ENCODE measurements at regions of chr17 and their contacts with region 1.

Region 1: GRCh38 chr17:4997302-4998026 is at the starts of genes INCA1 and KIF1C:
- DNase-seq: peak; percentile 95
- ATAC-seq: peak; percentile 96
- H3K4me3 ChIP-seq: peak within 1 kb of the TSS; percentile 34 to 73 (median 66)
- H3K4me3 Mint-ChIP-seq: peak within 1 kb of the TSS; percentile 85
- H3K27ac ChIP-seq: peak within 1 kb of the TSS in 1 of 2 donors; percentile 65
- H3K27ac Mint-ChIP-seq: peak within 1 kb of the TSS; percentile 83
- H3K4me1 ChIP-seq: peaks cover 22 to 26% of the 10 kb centered on the region in 2 donors
- H3K4me1 Mint-ChIP-seq: peaks cover 21% of the 10 kb centered on the region
- H3K27me3 ChIP-seq: peaks cover 0 to 13% (median 2%) of the 10 kb centered on the region in 4 experiments
- H3K27me3 Mint-ChIP-seq: no peaks in the 10 kb centered on the region
- CTCF ChIP-seq: no peak
- total RNA-seq, gene INCA1: 0.30 and 0.51 TPM in 2 replicates
- total RNA-seq, gene KIF1C: 29.6 and 41.5 TPM in 2 replicates

Region 2: GRCh38 chr17:4939796-4940624 is 57.5 kb before region 1 on chr17 and contains the starts of genes RNF167 and SLC25A11:
- CTCF ChIA-PET with region 1: interaction called, 4 read pairs
- POLR2A ChIA-PET with region 1: interaction called, 4 read pairs
- intact Hi-C with region 1: loop called (anchors 2 kb)
- DNase-seq: peak; percentile 99
- ATAC-seq: peak; percentile 84
- H3K4me3 ChIP-seq: peak within 1 kb of the TSS; percentile 83 to 100 (median 86)
- H3K4me3 Mint-ChIP-seq: peak within 1 kb of the TSS; percentile 89
- H3K27ac ChIP-seq: peak within 1 kb of the TSS; percentile 84 to 87
- H3K27ac Mint-ChIP-seq: peak within 1 kb of the TSS; percentile 95
- H3K4me1 ChIP-seq: peaks cover 50 to 59% of the 10 kb centered on the region in 2 donors
- H3K4me1 Mint-ChIP-seq: peaks cover 58% of the 10 kb centered on the region
- H3K27me3 ChIP-seq: no peaks in the 10 kb centered on the region
- H3K27me3 Mint-ChIP-seq: no peaks in the 10 kb centered on the region
- CTCF ChIP-seq: no peak
- total RNA-seq, gene RNF167: 131 and 143 TPM in 2 replicates
- total RNA-seq, gene SLC25A11: 32.3 and 42.7 TPM in 2 replicates

Region 3: GRCh38 chr17:4986951-4987766 is 10.3 kb before region 1 on chr17 and contains the start of gene CAMTA2:
- CTCF ChIA-PET with region 1: interaction called, 26 read pairs
- POLR2A ChIA-PET with region 1: interaction called, 9 read pairs
- intact Hi-C with region 1: loop called (anchors 1 kb)
- DNase-seq: peak; percentile 91
- ATAC-seq: peak; percentile 89
- H3K4me3 ChIP-seq: peak within 1 kb of the TSS; percentile 67 to 96 (median 81)
- H3K4me3 Mint-ChIP-seq: peak within 1 kb of the TSS; percentile 91
- H3K27ac ChIP-seq: peak within 1 kb of the TSS; percentile 84 to 90
- H3K27ac Mint-ChIP-seq: peak within 1 kb of the TSS; percentile 90
- H3K4me1 ChIP-seq: peaks cover 21 to 28% of the 10 kb centered on the region in 2 donors
- H3K4me1 Mint-ChIP-seq: peaks cover 35% of the 10 kb centered on the region
- H3K27me3 ChIP-seq: no peaks in the 10 kb centered on the region
- H3K27me3 Mint-ChIP-seq: no peaks in the 10 kb centered on the region
- CTCF ChIP-seq: peak; percentile 88
- total RNA-seq, gene CAMTA2: 57.6 and 57.9 TPM in 2 replicates

Region 4: GRCh38 chr17:5031365-5032082 is 34.1 kb after region 1 on chr17:
- CTCF ChIA-PET with region 1: interaction called, 4 read pairs
- POLR2A ChIA-PET with region 1: interaction called, 9 read pairs
- intact Hi-C with region 1: loop called (anchors 5 kb)
- DNase-seq: peak; percentile 88
- ATAC-seq: peak; percentile 87
- H3K4me3 ChIP-seq: peak overlapping the region; percentile 34 to 67 (median 38)
- H3K4me3 Mint-ChIP-seq: peak overlapping the region; percentile 89
- H3K27ac ChIP-seq: peak overlapping the region; percentile 24 to 62
- H3K27ac Mint-ChIP-seq: peak overlapping the region; percentile 67
- H3K4me1 ChIP-seq: peaks cover 7 to 18% of the 10 kb centered on the region in 2 donors
- H3K4me1 Mint-ChIP-seq: peaks cover 25% of the 10 kb centered on the region
- H3K27me3 ChIP-seq: peaks cover 0 to 21% (median 5%) of the 10 kb centered on the region in 4 experiments
- H3K27me3 Mint-ChIP-seq: no peaks in the 10 kb centered on the region
- CTCF ChIP-seq: peak; percentile 80

Region 5: DNA sequence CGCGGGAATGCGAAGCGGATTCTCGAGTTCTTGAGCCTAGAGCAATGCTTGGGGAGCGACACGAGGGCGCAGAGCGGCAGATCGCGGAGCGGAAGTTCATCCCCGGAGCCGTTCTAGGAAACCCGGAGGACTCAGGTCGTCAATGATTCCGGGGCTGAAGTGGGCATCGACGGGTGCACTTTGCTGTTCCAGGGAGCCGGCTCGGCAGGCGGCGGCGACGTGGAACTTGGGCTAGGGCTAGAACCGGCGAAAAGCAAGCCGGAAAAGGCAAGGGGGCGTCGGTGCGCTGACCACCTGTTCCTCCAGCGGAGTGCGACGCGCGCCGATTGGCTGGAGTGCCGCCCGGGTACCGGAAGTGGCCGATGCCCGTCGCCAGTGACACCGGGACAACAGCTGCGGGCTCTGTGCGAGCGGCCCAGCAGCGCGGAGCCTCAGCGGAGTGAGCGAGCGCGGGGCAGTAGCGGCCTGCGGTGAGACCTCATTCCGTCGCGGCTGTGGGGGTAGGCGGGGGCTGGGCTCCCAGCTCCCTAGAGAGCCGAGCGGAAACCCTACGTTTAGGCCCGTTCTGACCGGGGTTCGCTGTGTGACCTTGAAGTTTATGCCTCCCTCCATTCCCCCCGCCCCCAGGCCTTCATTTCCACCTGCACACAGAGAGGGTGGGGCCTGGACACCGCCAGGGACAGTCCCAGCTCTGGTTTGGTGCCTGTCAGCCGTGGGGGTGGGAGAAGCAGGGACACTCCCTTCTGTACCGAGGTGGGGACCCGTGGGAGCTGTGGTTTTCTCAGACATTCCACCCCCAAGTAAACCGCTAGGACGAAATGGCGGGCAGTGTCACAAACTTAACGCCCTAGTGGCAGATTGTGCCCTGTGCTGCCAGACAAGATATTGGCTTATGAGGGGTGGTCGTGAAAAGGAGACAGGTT is 80.9 kb after region 1 on chr17 and contains the start of gene ZFP3:
- CTCF ChIA-PET with region 1: no interaction called
- POLR2A ChIA-PET with region 1: no interaction called
- intact Hi-C with region 1: loop called (anchors 1 kb)
- DNase-seq: peak; percentile 92
- ATAC-seq: peak; percentile 83
- H3K4me3 ChIP-seq: peak within 1 kb of the TSS; percentile 68 to 78 (median 75)
- H3K4me3 Mint-ChIP-seq: peak within 1 kb of the TSS; percentile 81
- H3K27ac ChIP-seq: peak within 1 kb of the TSS; percentile 81 to 86
- H3K27ac Mint-ChIP-seq: peak within 1 kb of the TSS; percentile 95
- H3K4me1 ChIP-seq: peaks cover 8 to 21% of the 10 kb centered on the region in 2 donors
- H3K4me1 Mint-ChIP-seq: peaks cover 30% of the 10 kb centered on the region
- H3K27me3 ChIP-seq: no peaks in the 10 kb centered on the region
- H3K27me3 Mint-ChIP-seq: no peaks in the 10 kb centered on the region
- CTCF ChIP-seq: peak; percentile 64
- total RNA-seq, gene ZFP3: 15.8 and 16.2 TPM in 2 replicates